ENCODE measurements at regions of chr15 and their contacts with region 1.

Region 1: GRCh38 chr15:94163999-94164807 is 67.2 kb upstream of the MCTP2 start:
- DNase-seq: peak; percentile 76
- H3K4me3 Mint-ChIP-seq: no peak overlapping the region
- H3K27ac Mint-ChIP-seq: no peak overlapping the region
- H3K4me1 Mint-ChIP-seq: no peaks in the 10 kb centered on the region
- H3K27me3 Mint-ChIP-seq: no peaks in the 10 kb centered on the region

Region 2: GRCh38 chr15:94174399-94174802 is 10.2 kb after region 1 on chr15:
- CTCF ChIA-PET with region 1: interaction called, 13 read pairs
- intact Hi-C with region 1: no loop called
- DNase-seq: peak; percentile 26
- H3K4me3 Mint-ChIP-seq: no peak overlapping the region
- H3K27ac Mint-ChIP-seq: peak overlapping the region; percentile 10
- H3K4me1 Mint-ChIP-seq: peaks cover 19% of the 10 kb centered on the region
- H3K27me3 Mint-ChIP-seq: peaks cover 6% of the 10 kb centered on the region

Region 3: GRCh38 chr15:94335616-94336015 is 171.4 kb after region 1 on chr15:
- CTCF ChIA-PET with region 1: interaction called, 16 read pairs
- intact Hi-C with region 1: no loop called
- DNase-seq: no peak
- H3K4me3 Mint-ChIP-seq: no peak overlapping the region
- H3K27ac Mint-ChIP-seq: no peak overlapping the region
- H3K4me1 Mint-ChIP-seq: no peaks in the 10 kb centered on the region
- H3K27me3 Mint-ChIP-seq: no peaks in the 10 kb centered on the region

Region 4: GRCh38 chr15:94576889-94577533 is 412.8 kb after region 1 on chr15:
- CTCF ChIA-PET with region 1: no interaction called
- intact Hi-C with region 1: loop called (anchors 1 kb)
- DNase-seq: peak; percentile 65
- H3K4me3 Mint-ChIP-seq: no peak overlapping the region
- H3K27ac Mint-ChIP-seq: no peak overlapping the region
- H3K4me1 Mint-ChIP-seq: peaks cover 2% of the 10 kb centered on the region
- H3K27me3 Mint-ChIP-seq: peaks cover 57% of the 10 kb centered on the region